A549 (cell line): ENCODE measurements at regions of chr11 and their contacts with region 1.

Region 1: DNA sequence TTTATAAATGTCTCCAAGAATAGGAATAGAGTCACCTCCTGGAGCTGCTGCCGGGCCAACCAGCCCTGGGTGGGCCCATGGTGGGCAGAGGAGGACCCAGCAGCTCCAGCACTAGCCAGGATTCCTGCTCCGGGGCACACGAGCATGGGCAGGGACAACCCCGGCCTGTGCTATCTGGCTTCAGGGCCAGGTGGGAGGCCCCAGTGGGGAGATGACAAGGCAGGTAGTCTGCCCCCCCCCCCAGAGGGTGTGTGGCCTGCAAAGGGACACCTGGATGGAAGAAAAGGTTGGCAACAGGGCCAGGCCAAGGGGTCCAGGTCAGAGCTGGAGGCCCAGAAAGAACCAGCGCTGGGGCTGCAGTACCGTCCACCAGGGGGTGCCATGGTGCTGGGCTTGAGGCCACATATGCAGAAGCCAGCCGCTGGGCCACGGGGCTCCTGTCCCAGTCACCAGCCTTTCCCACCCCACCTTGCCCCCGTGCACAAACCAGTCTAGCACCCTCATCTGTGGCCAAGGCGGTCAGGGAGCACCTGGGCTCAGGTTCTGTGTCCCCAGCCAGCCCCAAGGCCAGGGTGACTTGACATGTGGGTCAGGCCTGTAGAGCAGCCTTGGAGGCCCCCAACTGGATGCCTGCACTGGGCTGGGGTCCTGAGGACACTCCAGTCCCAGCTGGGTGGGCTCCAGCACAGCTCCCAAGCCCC is 3.5 kb downstream of the TSPAN32 start:
- DNase-seq: peak; percentile 58 to 62
- ATAC-seq: peak; percentile 77 to 92
- H3K4me3 ChIP-seq: no peak overlapping the region
- H3K27ac ChIP-seq: no peak overlapping the region
- H3K4me1 ChIP-seq: no peaks in the 10 kb centered on the region
- CTCF ChIP-seq: peak; percentile 81
- EP300 ChIP-seq: no peak
- POLR2A ChIP-seq: no peak
- RAD21 ChIP-seq: peak; percentile 92 to 93

Region 2: DNA sequence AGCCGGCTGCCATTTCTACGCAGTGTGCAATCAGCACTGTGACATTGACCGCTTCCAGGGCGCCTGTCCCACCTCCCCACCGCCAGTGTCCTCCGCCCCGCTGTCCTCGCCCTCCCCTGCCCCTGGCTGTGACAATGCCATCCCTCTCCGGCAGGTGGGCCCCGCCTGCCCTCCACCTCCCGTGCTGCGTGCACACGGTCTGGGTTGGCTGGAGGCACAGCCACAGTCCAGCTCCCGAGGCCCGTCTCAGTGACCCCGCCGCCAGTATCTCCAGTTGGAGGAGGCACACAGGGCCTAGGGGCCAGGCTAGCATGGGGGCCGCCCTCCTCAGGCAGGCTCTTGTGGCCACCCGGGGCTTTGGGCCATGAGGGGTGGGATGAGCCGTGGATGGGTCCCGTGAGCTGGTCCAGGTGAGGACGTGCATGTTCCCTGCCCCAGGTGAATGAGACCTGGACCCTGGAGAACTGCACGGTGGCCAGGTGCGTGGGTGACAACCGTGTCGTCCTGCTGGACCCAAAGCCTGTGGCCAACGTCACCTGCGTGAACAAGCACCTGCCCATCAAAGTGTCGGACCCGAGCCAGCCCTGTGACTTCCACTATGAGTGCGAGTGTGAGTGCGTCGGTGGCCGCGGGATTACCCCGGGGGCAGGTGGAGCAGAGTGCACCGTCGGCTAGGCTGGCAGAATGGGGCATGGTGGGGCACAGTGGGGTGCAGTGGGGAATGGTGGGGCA is 1052.8 kb before region 1 on chr11:
- CTCF ChIA-PET with region 1: no interaction called
- POLR2A ChIA-PET with region 1: no interaction called
- DNase-seq: no peak
- ATAC-seq: no peak
- H3K4me3 ChIP-seq: no peak overlapping the region
- H3K27ac ChIP-seq: no peak overlapping the region
- H3K4me1 ChIP-seq: no peaks in the 10 kb centered on the region
- CTCF ChIP-seq: no peak
- EP300 ChIP-seq: no peak
- POLR2A ChIP-seq: no peak
- RAD21 ChIP-seq: no peak

Region 3: GRCh38 chr11:2002807-2003206 is 302.5 kb before region 1 on chr11:
- CTCF ChIA-PET with region 1: no interaction called
- POLR2A ChIA-PET with region 1: no interaction called
- DNase-seq: no peak
- ATAC-seq: peak; percentile 49 to 72; a peak in 4 of 6 replicates
- H3K4me3 ChIP-seq: no peak overlapping the region
- H3K27ac ChIP-seq: no peak overlapping the region
- H3K4me1 ChIP-seq: no peaks in the 10 kb centered on the region
- CTCF ChIP-seq: no peak
- EP300 ChIP-seq: no peak
- POLR2A ChIP-seq: no peak
- RAD21 ChIP-seq: no peak

Region 4: DNA sequence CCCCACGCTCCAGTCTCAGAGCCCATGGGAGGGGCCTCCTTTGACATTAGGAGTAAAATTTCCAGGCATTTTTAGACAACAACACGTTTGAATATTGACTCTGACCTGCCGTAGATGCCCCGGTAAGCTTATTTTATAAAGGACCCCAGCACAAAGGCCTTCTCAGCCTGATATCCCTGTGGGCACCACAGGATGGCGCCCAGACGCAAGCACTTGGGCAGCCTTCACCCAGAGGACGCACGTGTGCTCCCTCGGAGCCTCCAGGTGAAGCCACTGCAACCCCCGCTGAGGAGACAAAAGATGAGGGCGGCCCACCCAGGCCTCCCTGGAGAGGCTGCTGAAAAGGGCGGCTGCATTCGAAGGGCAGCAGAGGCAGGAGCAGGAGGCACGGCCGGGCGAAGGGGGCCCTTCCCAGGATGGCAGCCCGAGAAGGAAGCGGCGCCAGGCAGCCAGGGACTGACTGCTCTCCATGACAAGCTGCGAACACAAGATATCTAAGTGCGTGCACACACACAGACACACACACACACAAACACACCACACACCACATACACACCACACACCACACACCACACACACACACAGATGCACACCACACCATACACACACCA is 118.5 kb before region 1 on chr11:
- CTCF ChIA-PET with region 1: interaction called, 67 read pairs
- POLR2A ChIA-PET with region 1: no interaction called
- DNase-seq: peak; percentile 76
- ATAC-seq: peak; percentile 72 to 92
- H3K4me3 ChIP-seq: no peak overlapping the region
- H3K27ac ChIP-seq: peak overlapping the region in 1 of 2 experiments; percentile 69; a peak in 2 of 6 replicates
- H3K4me1 ChIP-seq: no peaks in the 10 kb centered on the region
- CTCF ChIP-seq: peak; percentile 56
- EP300 ChIP-seq: no peak
- POLR2A ChIP-seq: no peak
- RAD21 ChIP-seq: peak; percentile 58 to 63; a peak in 4 of 5 replicates

Region 5: GRCh38 chr11:2208691-2209369 is 96.5 kb before region 1 on chr11:
- CTCF ChIA-PET with region 1: interaction called, 138 read pairs
- POLR2A ChIA-PET with region 1: no interaction called
- DNase-seq: peak in 1 of 2 experiments; percentile 38
- ATAC-seq: peak; percentile 49 to 75; a peak in 5 of 6 replicates
- H3K4me3 ChIP-seq: no peak overlapping the region
- H3K27ac ChIP-seq: peak overlapping the region in 1 of 2 experiments; percentile 80; a peak in 2 of 6 replicates
- H3K4me1 ChIP-seq: peaks cover 31% of the 10 kb centered on the region
- CTCF ChIP-seq: no peak
- EP300 ChIP-seq: no peak
- POLR2A ChIP-seq: no peak
- RAD21 ChIP-seq: no peak

Region 6: DNA sequence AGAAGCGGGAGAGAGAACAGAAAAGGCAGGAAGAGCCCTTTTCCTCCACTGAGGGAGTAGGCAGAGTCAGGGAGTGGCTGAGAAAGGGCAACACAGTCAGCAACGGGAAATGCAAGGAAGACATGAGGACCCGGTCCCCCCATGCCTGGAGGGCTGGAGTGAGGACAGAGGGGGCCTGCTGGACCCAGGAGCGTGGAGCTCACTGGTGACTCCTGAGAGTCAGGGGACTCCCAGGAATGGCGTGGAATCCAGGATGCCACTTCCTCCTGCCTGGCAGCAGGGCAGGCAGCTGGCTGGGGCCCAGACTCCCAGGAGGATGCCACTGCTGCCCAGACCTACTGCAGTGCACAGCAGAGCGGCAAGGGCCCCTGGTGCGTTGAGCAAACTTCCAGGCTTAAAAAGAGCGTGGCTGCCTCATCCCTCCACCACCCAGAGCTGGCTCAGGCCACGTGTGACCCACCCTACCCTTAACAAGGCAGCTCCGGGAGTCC is 14.9 kb before region 1 on chr11:
- CTCF ChIA-PET with region 1: interaction called, 22 read pairs
- POLR2A ChIA-PET with region 1: no interaction called
- DNase-seq: peak in 1 of 2 experiments; percentile 27
- ATAC-seq: peak; percentile 68 to 73; a peak in 5 of 6 replicates
- H3K4me3 ChIP-seq: no peak overlapping the region
- H3K27ac ChIP-seq: no peak overlapping the region
- H3K4me1 ChIP-seq: no peaks in the 10 kb centered on the region
- CTCF ChIP-seq: no peak
- EP300 ChIP-seq: no peak
- POLR2A ChIP-seq: no peak
- RAD21 ChIP-seq: no peak

Region 7: GRCh38 chr11:2366261-2366660 is 61.0 kb after region 1 on chr11:
- CTCF ChIA-PET with region 1: interaction called, 12 read pairs
- POLR2A ChIA-PET with region 1: no interaction called
- DNase-seq: no peak
- ATAC-seq: no peak
- H3K4me3 ChIP-seq: no peak overlapping the region
- H3K27ac ChIP-seq: no peak overlapping the region
- H3K4me1 ChIP-seq: no peaks in the 10 kb centered on the region
- CTCF ChIP-seq: no peak
- EP300 ChIP-seq: no peak
- POLR2A ChIP-seq: no peak
- RAD21 ChIP-seq: no peak

Region 8: DNA sequence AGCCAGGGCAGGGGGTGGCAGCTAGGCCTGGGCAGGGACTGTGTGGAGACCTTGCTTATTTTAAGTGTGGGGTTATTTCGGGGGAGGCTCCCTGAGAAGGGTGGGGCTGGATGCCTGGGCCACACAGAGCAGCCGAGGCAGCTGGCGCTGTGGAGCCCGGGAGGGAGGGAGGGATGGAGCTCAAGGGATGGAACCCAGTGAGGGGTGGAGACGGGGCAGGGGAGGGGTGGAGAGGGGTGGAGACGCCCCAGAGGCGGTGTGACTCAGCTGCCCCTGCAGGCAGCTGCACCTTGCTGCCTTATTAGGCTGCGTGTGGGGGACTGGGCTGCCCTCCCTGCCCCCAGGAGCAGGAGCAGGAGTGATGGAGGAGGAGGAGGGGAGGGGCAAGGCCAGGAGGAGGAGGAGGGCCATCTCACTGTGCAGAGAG is 85.4 kb after region 1 on chr11:
- CTCF ChIA-PET with region 1: interaction called, 16 read pairs
- POLR2A ChIA-PET with region 1: no interaction called
- DNase-seq: peak; percentile 31 to 44
- ATAC-seq: peak; percentile 17 to 60; a peak in 4 of 6 replicates
- H3K4me3 ChIP-seq: no peak overlapping the region
- H3K27ac ChIP-seq: peak overlapping the region; percentile 42 to 70; a peak in 4 of 6 replicates
- H3K4me1 ChIP-seq: peaks cover 24% of the 10 kb centered on the region
- CTCF ChIP-seq: no peak
- EP300 ChIP-seq: no peak
- POLR2A ChIP-seq: no peak
- RAD21 ChIP-seq: no peak

Region 9: GRCh38 chr11:2892215-2893020 is 587.1 kb after region 1 on chr11:
- CTCF ChIA-PET with region 1: interaction called, 12 read pairs
- POLR2A ChIA-PET with region 1: no interaction called
- DNase-seq: peak; percentile 49 to 74
- ATAC-seq: peak; percentile 42 to 74
- H3K4me3 ChIP-seq: peak overlapping the region; percentile 42
- H3K27ac ChIP-seq: peak overlapping the region; percentile 74 to 90
- H3K4me1 ChIP-seq: peaks cover 16% of the 10 kb centered on the region
- CTCF ChIP-seq: peak; percentile 83
- EP300 ChIP-seq: no peak
- POLR2A ChIP-seq: peak; percentile 28; the same call in 1 of the 2 replicates
- RAD21 ChIP-seq: peak; percentile 81 to 83